ENCODE measurements at regions of chr16 and their contacts with region 1.

Region 1: DNA sequence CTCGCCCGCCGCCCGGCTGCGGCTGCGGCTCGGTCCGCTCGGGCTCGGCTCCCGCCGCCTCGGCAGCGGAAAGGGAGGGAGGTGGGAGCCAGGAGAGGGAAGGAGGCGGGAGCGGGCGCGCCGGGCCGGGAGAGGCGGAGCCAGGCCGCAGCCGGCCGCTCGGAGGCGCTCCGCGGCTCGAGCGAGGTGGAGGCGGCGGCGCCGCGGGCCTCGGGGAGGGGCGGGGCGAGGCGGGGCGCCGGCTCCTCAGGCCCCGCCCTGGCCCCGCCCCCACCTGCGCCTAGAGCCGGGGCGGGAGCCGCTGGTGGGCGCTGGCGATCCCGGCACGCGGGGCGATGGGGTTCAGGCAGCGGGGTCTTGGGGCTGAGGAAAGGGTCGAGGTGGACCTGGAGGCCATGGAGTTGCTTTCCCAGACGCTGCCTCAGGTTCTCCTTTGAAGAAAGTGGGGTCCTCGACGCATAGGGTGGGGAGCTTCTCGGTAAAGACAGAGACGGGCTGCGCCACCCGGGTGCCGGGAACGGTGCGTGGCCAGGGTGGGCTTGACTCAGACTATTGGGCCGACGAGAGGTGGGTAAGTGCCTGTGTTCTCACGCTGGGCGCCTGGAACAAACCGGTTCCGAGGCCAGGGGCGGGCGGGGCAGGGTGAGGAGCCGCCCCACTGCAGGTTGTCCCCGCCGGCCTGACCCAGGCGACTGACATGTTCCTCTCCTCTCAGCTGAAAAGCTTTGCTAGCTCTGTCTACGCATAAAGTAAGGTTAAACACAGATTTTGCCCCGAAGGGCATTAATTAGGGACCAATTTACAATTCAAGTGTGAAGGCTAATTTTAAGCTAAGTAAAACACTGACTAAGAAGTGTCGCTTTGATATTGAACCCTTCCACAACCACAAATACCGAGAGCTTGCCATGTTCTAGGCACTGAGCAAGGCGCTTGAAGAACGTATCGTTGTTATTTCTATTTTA is at the start of gene CMTM4:
- DNase-seq: peak; percentile 93
- H3K4me3 ChIP-seq: peak within 1 kb of the TSS; percentile 54 to 94 (median 80)
- H3K27ac ChIP-seq: peak within 1 kb of the TSS; percentile 67 to 76 (median 71)
- H3K4me1 ChIP-seq: peaks cover 0 to 25% (median 17%) of the 10 kb centered on the region in 4 donors
- H3K27me3 ChIP-seq: no peaks in the 10 kb centered on the region
- CTCF ChIP-seq: no peak
- EP300 ChIP-seq: no peak
- POLR2A ChIP-seq: no peak
- total RNA-seq, gene CMTM4: 6.1 to 12.5 (median 9.4) TPM

Region 2: DNA sequence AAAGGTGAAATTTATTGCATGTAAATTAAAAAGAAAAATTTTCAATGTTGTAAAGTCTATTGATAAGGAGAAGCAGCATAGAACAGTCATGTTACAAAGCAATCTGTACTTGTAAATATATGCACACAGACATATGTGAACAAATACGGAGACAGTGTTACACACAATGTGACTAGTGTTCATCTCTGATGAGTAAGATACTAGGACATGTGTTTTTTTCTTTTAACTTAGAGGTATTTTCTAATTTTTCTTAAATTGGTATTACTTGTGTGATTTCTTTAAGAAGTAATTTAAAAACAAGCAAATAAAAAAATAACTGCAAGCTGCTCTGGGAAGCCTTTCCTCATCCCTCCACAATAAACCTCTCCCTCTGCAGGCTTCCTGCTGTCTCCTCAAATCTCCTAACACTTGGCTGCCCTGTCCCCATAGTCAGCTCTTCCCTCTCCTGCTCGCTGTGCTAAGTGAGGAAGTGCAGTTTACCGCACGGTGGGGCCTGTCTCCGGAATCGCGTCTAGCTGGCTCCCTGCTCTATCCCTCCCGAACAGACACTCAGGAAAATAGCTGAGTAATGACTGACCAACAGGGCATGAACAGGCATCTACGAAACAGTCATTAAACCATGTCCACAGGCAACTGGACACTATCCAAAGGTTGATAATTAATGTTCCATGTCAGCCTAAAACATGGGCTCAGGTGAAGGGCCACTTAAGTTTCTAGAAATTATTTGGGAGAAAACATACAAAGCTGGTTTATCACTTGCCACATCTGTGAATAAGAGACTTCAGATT is 36.3 kb before region 1 on chr16:
- intact Hi-C with region 1: loop called (anchors 2 kb)
- DNase-seq: peak; percentile 87
- H3K4me3 ChIP-seq: no peak overlapping the region
- H3K27ac ChIP-seq: peak overlapping the region; percentile 67 to 80 (median 74)
- H3K4me1 ChIP-seq: peaks cover 0 to 35% (median 27%) of the 10 kb centered on the region in 4 donors
- H3K27me3 ChIP-seq: no peaks in the 10 kb centered on the region
- CTCF ChIP-seq: peak in 1 of 4 experiments; percentile 10
- EP300 ChIP-seq: no peak
- POLR2A ChIP-seq: no peak

Region 3: DNA sequence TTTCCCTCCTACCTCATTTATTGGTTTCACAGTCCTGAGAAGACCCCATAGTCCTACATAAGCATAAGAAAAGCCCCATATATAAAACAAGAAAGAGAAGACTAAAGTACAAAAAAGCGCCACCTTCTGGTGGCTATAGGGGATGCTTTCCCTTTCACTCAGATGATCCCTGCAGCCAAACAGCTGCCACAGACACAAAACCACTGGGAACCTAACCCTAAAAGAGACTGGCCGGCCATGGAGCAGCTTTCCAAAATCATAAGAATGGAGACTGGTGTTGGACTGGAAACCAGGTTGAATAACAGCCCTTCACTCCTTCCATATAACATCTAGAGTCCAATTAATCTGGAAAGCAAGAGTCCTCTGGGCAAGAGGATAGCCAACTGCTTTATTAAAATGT is 43.1 kb after region 1 on chr16:
- intact Hi-C with region 1: loop called (anchors 2 kb)
- DNase-seq: no peak
- H3K4me3 ChIP-seq: no peak overlapping the region
- H3K27ac ChIP-seq: peak overlapping the region; percentile 78 to 88 (median 84)
- H3K4me1 ChIP-seq: peaks cover 0 to 58% (median 50%) of the 10 kb centered on the region in 4 donors
- H3K27me3 ChIP-seq: no peaks in the 10 kb centered on the region
- CTCF ChIP-seq: peak; percentile 14 to 50 (median 34)
- EP300 ChIP-seq: no peak
- POLR2A ChIP-seq: no peak